Left cardiac atrium (tissue), 4 donors: ENCODE measurements at regions of chr11 and their contacts with region 1.

Region 1: GRCh38 chr11:133134314-133135173 is 397.8 kb downstream of the OPCML start:
- DNase-seq: peak; percentile 69
- ATAC-seq: peak in 1 of 2 donors; percentile 89

Region 2: GRCh38 chr11:133271206-133271605 is 136.7 kb after region 1 on chr11:
- intact Hi-C with region 1: no loop called
- DNase-seq: no peak
- ATAC-seq: no peak

Region 3: GRCh38 chr11:133834682-133835592 is 700.4 kb after region 1 on chr11:
- intact Hi-C with region 1: loop called (anchors 5 to 10 kb)
- DNase-seq: peak; percentile 44
- ATAC-seq: peak; percentile 63 to 82